ENCODE measurements at regions of chr11 and their contacts with region 1.

Region 1: GRCh38 chr11:111788051-111788450 is 21.9 kb upstream of the PPP2R1B start:
- DNase-seq: peak; percentile 44 to 91 (median 76)
- ATAC-seq: peak; percentile 95 to 97 (median 96)
- H3K4me3 ChIP-seq: no peak overlapping the region
- H3K27ac ChIP-seq: peak overlapping the region; percentile 69 to 97 (median 82)
- H3K4me1 ChIP-seq: peaks cover 0 to 48% (median 8%) of the 10 kb centered on the region in 12 donors
- H3K27me3 ChIP-seq: no peaks in the 10 kb centered on the region
- CTCF ChIP-seq: no peak
- POLR2A ChIP-seq: no peak

Region 2: DNA sequence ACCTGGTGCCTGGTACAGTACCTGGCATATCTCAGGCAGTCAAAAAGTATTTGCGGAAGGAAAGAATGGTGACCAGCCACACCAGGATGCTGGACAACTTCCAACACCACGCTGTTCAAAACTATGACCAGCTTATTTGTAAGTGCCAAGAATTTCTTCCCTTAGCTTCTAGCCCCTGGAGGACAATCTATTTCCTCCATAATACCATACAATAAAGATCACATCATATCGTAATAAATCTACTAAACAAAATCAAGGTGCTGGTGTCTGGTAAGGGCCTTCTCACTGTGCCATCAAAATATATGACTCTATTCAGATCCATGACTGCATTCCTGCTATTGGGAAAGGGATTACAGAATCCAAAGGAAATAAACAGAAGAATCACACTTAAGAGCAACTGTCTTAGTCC is 31.8 kb after region 1 on chr11:
- intact Hi-C with region 1: loop called in 3 of 10 experiments (anchors 5 kb)
- DNase-seq: no peak
- ATAC-seq: peak in 2 of 4 donors; percentile 23 to 29
- H3K4me3 ChIP-seq: no peak overlapping the region
- H3K27ac ChIP-seq: peak overlapping the region; percentile 44 to 91 (median 74)
- H3K4me1 ChIP-seq: peaks cover 5 to 27% (median 20%) of the 10 kb centered on the region in 12 donors
- H3K27me3 ChIP-seq: no peaks in the 10 kb centered on the region
- CTCF ChIP-seq: no peak
- POLR2A ChIP-seq: no peak

Region 3: GRCh38 chr11:111833524-111833923 is 45.5 kb after region 1 on chr11:
- intact Hi-C with region 1: loop called in 3 of 10 experiments (anchors 2 to 10 kb)
- DNase-seq: no peak
- ATAC-seq: peak in 1 of 4 donors; percentile 47
- H3K4me3 ChIP-seq: no peak overlapping the region
- H3K27ac ChIP-seq: no peak overlapping the region
- H3K4me1 ChIP-seq: peaks cover 0 to 7% (median 0%) of the 10 kb centered on the region in 12 donors
- H3K27me3 ChIP-seq: no peaks in the 10 kb centered on the region
- CTCF ChIP-seq: peak in 7 of 12 donors; percentile 10 to 41 (median 21)
- POLR2A ChIP-seq: no peak

Region 4: GRCh38 chr11:111851636-111852035 is 63.6 kb after region 1 on chr11:
- intact Hi-C with region 1: no loop called
- DNase-seq: no peak
- ATAC-seq: no peak
- H3K4me3 ChIP-seq: no peak overlapping the region
- H3K27ac ChIP-seq: no peak overlapping the region
- H3K4me1 ChIP-seq: peaks cover 0 to 8% (median 0%) of the 10 kb centered on the region in 12 donors
- H3K27me3 ChIP-seq: no peaks in the 10 kb centered on the region
- CTCF ChIP-seq: peak in 6 of 12 donors; percentile 15 to 37 (median 26)
- POLR2A ChIP-seq: no peak